Activated CD8-positive, alpha-beta T cell treated with anti-CD3 and anti-CD28 coated beads for 36 hours (primary cell): ENCODE measurements at regions of chr2 and their contacts with region 1.

Region 1: GRCh38 chr2:12584338-12584737 is 132.4 kb upstream of the TRIB2 start:
- DNase-seq: no peak
- ATAC-seq: no peak
- H3K4me3 Mint-ChIP-seq: no peak overlapping the region
- H3K27ac Mint-ChIP-seq: no peak overlapping the region
- H3K4me1 Mint-ChIP-seq: peaks cover 24% of the 10 kb centered on the region
- H3K27me3 Mint-ChIP-seq: no peaks in the 10 kb centered on the region
- CTCF ChIP-seq: no peak

Region 2: DNA sequence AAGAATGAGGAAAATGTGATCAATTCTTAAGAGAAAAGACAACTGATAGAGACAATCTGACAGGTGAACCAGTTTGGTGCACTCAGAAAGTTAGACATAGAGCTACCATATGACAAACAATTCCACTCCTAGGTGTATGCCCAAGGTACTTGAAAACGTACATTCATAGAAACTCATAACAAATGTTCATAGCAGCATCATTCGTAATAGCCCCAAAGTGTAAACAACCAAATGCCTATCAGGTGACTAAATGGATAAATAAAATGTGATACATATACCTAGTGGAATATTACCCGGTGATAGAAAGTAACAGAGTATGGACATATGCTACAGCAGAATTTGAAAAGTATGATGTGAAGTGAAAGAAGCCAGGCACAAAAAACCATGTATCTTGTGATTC is 16.9 kb before region 1 on chr2:
- CTCF ChIA-PET with region 1: no interaction called
- POLR2A ChIA-PET with region 1: no interaction called
- intact Hi-C with region 1: no loop called
- DNase-seq: no peak
- ATAC-seq: no peak
- H3K4me3 Mint-ChIP-seq: no peak overlapping the region
- H3K27ac Mint-ChIP-seq: no peak overlapping the region
- H3K4me1 Mint-ChIP-seq: peaks cover 11% of the 10 kb centered on the region
- H3K27me3 Mint-ChIP-seq: no peaks in the 10 kb centered on the region
- CTCF ChIP-seq: no peak

Region 3: GRCh38 chr2:12675352-12675795 is 91.0 kb after region 1 on chr2:
- CTCF ChIA-PET with region 1: no interaction called
- POLR2A ChIA-PET with region 1: no interaction called
- intact Hi-C with region 1: loop called (anchors 5 kb)
- DNase-seq: no peak
- ATAC-seq: no peak
- H3K4me3 Mint-ChIP-seq: no peak overlapping the region
- H3K27ac Mint-ChIP-seq: no peak overlapping the region
- H3K4me1 Mint-ChIP-seq: no peaks in the 10 kb centered on the region
- H3K27me3 Mint-ChIP-seq: no peaks in the 10 kb centered on the region
- CTCF ChIP-seq: no peak

Region 4: GRCh38 chr2:12702305-12703121 is 118.2 kb after region 1 on chr2:
- CTCF ChIA-PET with region 1: no interaction called
- POLR2A ChIA-PET with region 1: no interaction called
- intact Hi-C with region 1: no loop called
- DNase-seq: peak; percentile 39
- ATAC-seq: peak; percentile 86
- H3K4me3 Mint-ChIP-seq: no peak overlapping the region
- H3K27ac Mint-ChIP-seq: no peak overlapping the region
- H3K4me1 Mint-ChIP-seq: peaks cover 36% of the 10 kb centered on the region
- H3K27me3 Mint-ChIP-seq: no peaks in the 10 kb centered on the region
- CTCF ChIP-seq: no peak